Activated CD4-positive, alpha-beta memory T cell treated with anti-CD3 and anti-CD28 coated beads, Interleukin-2, amount 10 ng/mL, durations not matched to agents 7 days and 5 days (primary cell): ENCODE measurements at regions of chr4 and their contacts with region 1.

Region 1: GRCh38 chr4:142405021-142405694 is 440.9 kb downstream of the INPP4B start:
- DNase-seq: peak; percentile 71
- H3K4me3 Mint-ChIP-seq: peak overlapping the region; percentile 86
- H3K27ac Mint-ChIP-seq: peak overlapping the region; percentile 99
- H3K4me1 Mint-ChIP-seq: peaks cover 59% of the 10 kb centered on the region
- H3K27me3 Mint-ChIP-seq: no peaks in the 10 kb centered on the region

Region 2: GRCh38 chr4:142248946-142249345 is 156.2 kb before region 1 on chr4:
- CTCF ChIA-PET with region 1: no interaction called
- POLR2A ChIA-PET with region 1: no interaction called
- DNase-seq: no peak
- H3K4me3 Mint-ChIP-seq: no peak overlapping the region
- H3K27ac Mint-ChIP-seq: no peak overlapping the region
- H3K4me1 Mint-ChIP-seq: no peaks in the 10 kb centered on the region
- H3K27me3 Mint-ChIP-seq: no peaks in the 10 kb centered on the region

Region 3: GRCh38 chr4:142307857-142308256 is 97.3 kb before region 1 on chr4:
- CTCF ChIA-PET with region 1: no interaction called
- POLR2A ChIA-PET with region 1: no interaction called
- DNase-seq: no peak
- H3K4me3 Mint-ChIP-seq: no peak overlapping the region
- H3K27ac Mint-ChIP-seq: no peak overlapping the region
- H3K4me1 Mint-ChIP-seq: peaks cover 3% of the 10 kb centered on the region
- H3K27me3 Mint-ChIP-seq: no peaks in the 10 kb centered on the region

Region 4: DNA sequence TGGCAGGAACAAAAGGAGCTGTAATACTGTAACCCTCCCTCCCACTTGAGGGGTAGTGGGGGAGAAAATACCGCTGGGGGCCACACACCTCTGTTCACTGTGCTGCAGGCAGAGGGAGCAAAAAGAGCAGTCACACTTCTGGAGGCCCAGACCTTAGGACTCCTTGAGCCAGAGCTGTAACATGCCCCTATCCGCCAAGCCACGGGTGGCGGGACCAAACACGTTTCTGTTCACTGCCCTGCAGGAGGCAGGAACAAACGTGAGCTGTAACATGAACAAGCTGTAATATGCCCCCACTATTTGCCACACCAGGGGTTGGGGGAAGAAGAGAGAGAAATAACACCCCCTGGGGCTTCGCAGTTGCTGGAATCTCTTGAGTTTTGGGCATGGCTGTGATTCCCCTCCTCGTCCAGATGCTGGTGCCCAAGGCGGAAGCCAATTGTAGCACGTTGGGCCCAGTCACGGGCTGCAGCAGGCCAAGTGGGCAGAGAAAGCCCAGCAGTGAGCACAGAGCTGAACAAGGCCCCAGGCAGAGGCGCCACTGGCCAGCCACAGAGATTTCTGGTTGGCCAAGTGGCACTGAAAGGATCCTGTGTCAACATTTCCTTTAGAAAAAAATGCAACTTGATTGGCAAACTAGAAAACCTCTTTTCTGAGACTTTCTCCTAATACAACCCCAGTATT is 68.8 kb before region 1 on chr4:
- CTCF ChIA-PET with region 1: no interaction called
- POLR2A ChIA-PET with region 1: no interaction called
- DNase-seq: no peak
- H3K4me3 Mint-ChIP-seq: no peak overlapping the region
- H3K27ac Mint-ChIP-seq: no peak overlapping the region
- H3K4me1 Mint-ChIP-seq: peaks cover under 1% of the 10 kb centered on the region
- H3K27me3 Mint-ChIP-seq: no peaks in the 10 kb centered on the region

Region 5: GRCh38 chr4:142353149-142353738 is 51.9 kb before region 1 on chr4:
- CTCF ChIA-PET with region 1: interaction called, 65 read pairs
- POLR2A ChIA-PET with region 1: interaction called, 119 read pairs
- DNase-seq: no peak
- H3K4me3 Mint-ChIP-seq: no peak overlapping the region
- H3K27ac Mint-ChIP-seq: peak overlapping the region; percentile 51
- H3K4me1 Mint-ChIP-seq: peaks cover 91% of the 10 kb centered on the region
- H3K27me3 Mint-ChIP-seq: no peaks in the 10 kb centered on the region

Region 6: GRCh38 chr4:142379277-142380057 is 25.7 kb before region 1 on chr4:
- CTCF ChIA-PET with region 1: interaction called, 7 read pairs
- POLR2A ChIA-PET with region 1: interaction called, 44 read pairs
- DNase-seq: no peak
- H3K4me3 Mint-ChIP-seq: no peak overlapping the region
- H3K27ac Mint-ChIP-seq: peak overlapping the region; percentile 9
- H3K4me1 Mint-ChIP-seq: peaks cover 66% of the 10 kb centered on the region
- H3K27me3 Mint-ChIP-seq: no peaks in the 10 kb centered on the region

Region 7: GRCh38 chr4:142416711-142417275 is 11.6 kb after region 1 on chr4:
- CTCF ChIA-PET with region 1: interaction called, 34 read pairs
- POLR2A ChIA-PET with region 1: interaction called, 291 read pairs
- DNase-seq: no peak
- H3K4me3 Mint-ChIP-seq: peak overlapping the region; percentile 63
- H3K27ac Mint-ChIP-seq: peak overlapping the region; percentile 98
- H3K4me1 Mint-ChIP-seq: peaks cover 39% of the 10 kb centered on the region
- H3K27me3 Mint-ChIP-seq: no peaks in the 10 kb centered on the region

Region 8: GRCh38 chr4:142567199-142567598 is 162.0 kb after region 1 on chr4:
- CTCF ChIA-PET with region 1: interaction called, 26 read pairs
- POLR2A ChIA-PET with region 1: interaction called, 146 read pairs
- DNase-seq: peak; percentile 68
- H3K4me3 Mint-ChIP-seq: peak overlapping the region; percentile 82
- H3K27ac Mint-ChIP-seq: peak overlapping the region; percentile 96
- H3K4me1 Mint-ChIP-seq: peaks cover 63% of the 10 kb centered on the region
- H3K27me3 Mint-ChIP-seq: no peaks in the 10 kb centered on the region